Ascending aorta (tissue), 2 donors: ENCODE measurements at regions of chr4 and their contacts with region 1.

Region 1: DNA sequence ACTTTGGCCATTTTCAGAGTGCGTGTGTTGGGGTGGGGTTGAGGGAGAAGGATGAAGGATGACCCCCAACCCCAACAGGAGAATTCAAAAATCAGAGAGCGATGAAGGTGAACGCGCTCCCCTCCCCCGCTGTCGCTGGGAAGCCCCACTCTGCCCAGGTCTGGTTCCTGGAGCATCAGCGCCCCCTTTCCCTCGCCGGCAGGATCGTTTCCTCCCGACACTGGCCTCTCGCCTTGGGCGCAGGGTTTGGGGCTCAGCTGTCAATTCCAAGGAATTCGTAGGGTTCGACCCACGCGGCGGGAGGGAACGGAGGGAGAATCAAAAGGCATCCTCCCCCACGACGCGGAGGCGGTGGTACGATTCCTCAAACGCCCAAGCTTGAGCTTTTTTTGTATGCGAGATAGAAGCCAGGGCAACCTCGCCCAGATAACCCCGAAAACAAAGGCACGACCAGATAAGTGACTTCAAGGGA is 1.0 kb upstream of the PDGFRA start:
- DNase-seq: peak in 1 of 2 donors; percentile 86
- H3K4me3 ChIP-seq: peak overlapping the region; percentile 71 to 81
- H3K27ac ChIP-seq: peak overlapping the region; percentile 87 to 93
- H3K4me1 ChIP-seq: peaks cover 7 to 15% of the 10 kb centered on the region in 2 donors
- H3K27me3 ChIP-seq: no peaks in the 10 kb centered on the region
- CTCF ChIP-seq: peak; percentile 62 to 90 (median 78)

Region 2: DNA sequence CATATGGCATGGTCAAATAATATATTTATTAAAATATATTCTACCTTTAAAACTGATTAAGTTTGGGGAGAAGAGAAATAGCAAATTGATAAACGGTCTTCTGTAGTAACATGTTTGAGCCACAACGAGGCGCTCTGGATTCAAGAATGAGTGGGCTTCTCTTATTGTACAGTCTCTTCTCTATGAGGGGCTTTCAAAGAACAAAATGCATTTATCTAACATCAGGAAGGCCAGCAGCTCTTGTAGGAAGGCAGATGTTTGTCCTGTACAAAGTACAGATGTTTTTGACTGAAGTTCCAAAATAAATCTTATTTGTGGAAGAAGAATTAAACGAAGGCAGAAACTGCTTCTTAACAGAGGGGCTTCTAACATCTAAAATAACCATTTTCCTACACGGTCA is 1212.4 kb before region 1 on chr4:
- intact Hi-C with region 1: loop called (anchors 2 kb)
- DNase-seq: no peak
- H3K4me3 ChIP-seq: no peak overlapping the region
- H3K27ac ChIP-seq: peak overlapping the region in 1 of 2 donors; percentile 27
- H3K4me1 ChIP-seq: peaks cover 0 to 54% of the 10 kb centered on the region in 2 donors
- H3K27me3 ChIP-seq: no peaks in the 10 kb centered on the region
- CTCF ChIP-seq: peak; percentile 57 to 78 (median 76)

Region 3: GRCh38 chr4:53321151-53321983 is 906.7 kb before region 1 on chr4:
- intact Hi-C with region 1: loop called (anchors 5 kb)
- DNase-seq: no peak
- H3K4me3 ChIP-seq: peak overlapping the region; percentile 14 to 23
- H3K27ac ChIP-seq: peak overlapping the region; percentile 81 to 87
- H3K4me1 ChIP-seq: peaks cover 4 to 15% of the 10 kb centered on the region in 2 donors
- H3K27me3 ChIP-seq: no peaks in the 10 kb centered on the region
- CTCF ChIP-seq: no peak

Region 4: GRCh38 chr4:53702334-53703266 is 525.5 kb before region 1 on chr4:
- intact Hi-C with region 1: loop called (anchors 5 kb)
- DNase-seq: peak in 1 of 2 donors; percentile 80
- H3K4me3 ChIP-seq: peak overlapping the region; percentile 39 to 52
- H3K27ac ChIP-seq: peak overlapping the region; percentile 52 to 65
- H3K4me1 ChIP-seq: peaks cover 0 to 16% of the 10 kb centered on the region in 2 donors
- H3K27me3 ChIP-seq: no peaks in the 10 kb centered on the region
- CTCF ChIP-seq: no peak

Region 5: GRCh38 chr4:54091637-54092404 is 136.3 kb before region 1 on chr4:
- intact Hi-C with region 1: loop called (anchors 5 kb)
- DNase-seq: peak in 1 of 2 donors; percentile 88
- H3K4me3 ChIP-seq: peak overlapping the region; percentile 59 to 82
- H3K27ac ChIP-seq: peak overlapping the region in 1 of 2 donors; percentile 26
- H3K4me1 ChIP-seq: peaks cover 3 to 9% of the 10 kb centered on the region in 2 donors
- H3K27me3 ChIP-seq: no peaks in the 10 kb centered on the region
- CTCF ChIP-seq: no peak

Region 6: GRCh38 chr4:54276641-54277430 is 48.7 kb after region 1 on chr4:
- intact Hi-C with region 1: no loop called
- DNase-seq: no peak
- H3K4me3 ChIP-seq: peak overlapping the region in 1 of 2 donors; percentile 3
- H3K27ac ChIP-seq: peak overlapping the region; percentile 80 to 81
- H3K4me1 ChIP-seq: peaks cover 14 to 48% of the 10 kb centered on the region in 2 donors
- H3K27me3 ChIP-seq: no peaks in the 10 kb centered on the region
- CTCF ChIP-seq: no peak

Region 7: GRCh38 chr4:55887594-55887993 is 1659.5 kb after region 1 on chr4:
- intact Hi-C with region 1: no loop called
- DNase-seq: no peak
- H3K4me3 ChIP-seq: no peak overlapping the region
- H3K27ac ChIP-seq: no peak overlapping the region
- H3K4me1 ChIP-seq: no peaks in the 10 kb centered on the region
- H3K27me3 ChIP-seq: no peaks in the 10 kb centered on the region
- CTCF ChIP-seq: no peak